Natural killer cell (primary cell): ENCODE measurements at regions of chr3 and their contacts with region 1.

Region 1: GRCh38 chr3:15205934-15206661 is at the start of gene CAPN7:
- DNase-seq: peak; percentile 97
- ATAC-seq: peak; percentile 90 to 98 (median 91)
- H3K4me3 ChIP-seq: peak within 1 kb of the TSS; percentile 71
- H3K4me3 Mint-ChIP-seq: peak within 1 kb of the TSS; percentile 92
- H3K27ac ChIP-seq: peak within 1 kb of the TSS; percentile 88
- H3K27ac Mint-ChIP-seq: peak within 1 kb of the TSS; percentile 93 to 96
- H3K4me1 ChIP-seq: peaks cover 13% of the 10 kb centered on the region
- H3K4me1 Mint-ChIP-seq: peaks cover 24 to 36% of the 10 kb centered on the region in 2 donors
- H3K27me3 ChIP-seq: no peaks in the 10 kb centered on the region
- H3K27me3 Mint-ChIP-seq: no peaks in the 10 kb centered on the region
- CTCF ChIP-seq: peak; percentile 15
- total RNA-seq, gene CAPN7: 35.3 to 59.9 (median 52.8) TPM

Region 2: GRCh38 chr3:15098503-15099363 is 107.4 kb before region 1 on chr3 and contains the start of gene RBSN:
- intact Hi-C with region 1: loop called (anchors 1 kb)
- DNase-seq: peak; percentile 94 to 98
- ATAC-seq: peak; percentile 77 to 91 (median 82)
- H3K4me3 ChIP-seq: peak within 1 kb of the TSS; percentile 77
- H3K4me3 Mint-ChIP-seq: peak within 1 kb of the TSS; percentile 84
- H3K27ac ChIP-seq: peak within 1 kb of the TSS; percentile 96
- H3K27ac Mint-ChIP-seq: peak within 1 kb of the TSS; percentile 87 to 99
- H3K4me1 ChIP-seq: peaks cover 24% of the 10 kb centered on the region
- H3K4me1 Mint-ChIP-seq: peaks cover 18 to 27% of the 10 kb centered on the region in 2 donors
- H3K27me3 ChIP-seq: no peaks in the 10 kb centered on the region
- H3K27me3 Mint-ChIP-seq: peaks cover 0 to 10% of the 10 kb centered on the region in 2 donors
- CTCF ChIP-seq: no peak
- total RNA-seq, gene RBSN: 27.6 to 34.4 (median 29.4) TPM

Region 3: GRCh38 chr3:15377961-15378791 is 172.1 kb after region 1 on chr3:
- intact Hi-C with region 1: loop called (anchors 1 kb)
- DNase-seq: peak; percentile 93 to 98
- ATAC-seq: peak; percentile 96 to 98 (median 98)
- H3K4me3 ChIP-seq: no peak overlapping the region
- H3K4me3 Mint-ChIP-seq: peak overlapping the region; percentile 42
- H3K27ac ChIP-seq: peak overlapping the region; percentile 98
- H3K27ac Mint-ChIP-seq: peak overlapping the region; percentile 95
- H3K4me1 ChIP-seq: peaks cover 5% of the 10 kb centered on the region
- H3K4me1 Mint-ChIP-seq: peaks cover 8 to 9% of the 10 kb centered on the region in 2 donors
- H3K27me3 ChIP-seq: no peaks in the 10 kb centered on the region
- H3K27me3 Mint-ChIP-seq: no peaks in the 10 kb centered on the region
- CTCF ChIP-seq: peak; percentile 91

Region 4: GRCh38 chr3:15557511-15557946 is 351.4 kb after region 1 on chr3:
- intact Hi-C with region 1: loop called (anchors 1 kb)
- DNase-seq: peak; percentile 27 to 81
- ATAC-seq: peak; percentile 86 to 91 (median 88)
- H3K4me3 ChIP-seq: no peak overlapping the region
- H3K4me3 Mint-ChIP-seq: no peak overlapping the region
- H3K27ac ChIP-seq: no peak overlapping the region
- H3K27ac Mint-ChIP-seq: peak overlapping the region; percentile 85 to 91
- H3K4me1 ChIP-seq: peaks cover 14% of the 10 kb centered on the region
- H3K4me1 Mint-ChIP-seq: peaks cover 17 to 18% of the 10 kb centered on the region in 2 donors
- H3K27me3 ChIP-seq: no peaks in the 10 kb centered on the region
- H3K27me3 Mint-ChIP-seq: no peaks in the 10 kb centered on the region
- CTCF ChIP-seq: peak; percentile 82

Region 5: DNA sequence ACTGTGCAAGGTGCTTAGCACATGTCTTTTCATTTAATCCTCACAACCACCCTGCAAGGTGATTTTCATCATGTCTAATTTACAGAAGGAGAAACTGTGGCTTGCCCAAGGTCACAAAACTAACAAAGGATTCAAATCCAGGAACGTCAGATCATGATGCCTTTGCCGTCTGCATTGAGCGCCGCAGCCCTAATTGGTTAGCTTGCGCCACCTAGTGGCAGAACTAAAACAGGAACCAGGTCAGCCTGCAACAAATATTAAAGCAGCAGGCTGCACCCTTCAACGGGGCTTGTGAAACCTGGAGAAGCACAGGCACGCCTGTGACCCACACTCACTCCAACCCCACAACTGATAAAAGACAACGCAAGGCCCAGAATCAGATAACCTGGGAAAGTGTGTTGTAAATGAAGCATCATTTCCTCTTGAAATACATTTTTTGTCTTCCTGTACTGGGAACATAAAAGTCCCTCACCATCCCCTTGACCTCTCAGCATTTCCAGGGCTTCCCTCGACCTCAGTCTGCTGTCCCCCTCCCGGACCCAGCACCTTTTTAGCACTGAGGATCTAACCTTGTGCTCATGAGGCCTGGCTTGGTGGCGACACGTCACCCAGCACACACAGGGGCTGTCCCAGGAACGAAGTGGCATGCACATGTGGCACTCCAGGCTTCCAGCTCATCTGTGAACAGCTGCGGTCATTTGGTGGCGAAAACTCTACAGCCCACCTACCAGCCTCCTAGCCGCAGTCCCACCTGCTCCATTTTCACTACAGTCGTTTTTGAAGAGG is 1041.4 kb after region 1 on chr3:
- intact Hi-C with region 1: loop called (anchors 5 kb)
- DNase-seq: peak; percentile 64 to 91
- ATAC-seq: peak; percentile 90 to 98 (median 97)
- H3K4me3 ChIP-seq: no peak overlapping the region
- H3K4me3 Mint-ChIP-seq: no peak overlapping the region
- H3K27ac ChIP-seq: no peak overlapping the region
- H3K27ac Mint-ChIP-seq: no peak overlapping the region
- H3K4me1 ChIP-seq: peaks cover 5% of the 10 kb centered on the region
- H3K4me1 Mint-ChIP-seq: peaks cover 0 to 11% of the 10 kb centered on the region in 2 donors
- H3K27me3 ChIP-seq: no peaks in the 10 kb centered on the region
- H3K27me3 Mint-ChIP-seq: no peaks in the 10 kb centered on the region
- CTCF ChIP-seq: peak; percentile 89